Activated naive CD4-positive, alpha-beta T cell treated with anti-CD3 and anti-CD28 coated beads for 36 hours (primary cell): ENCODE measurements at regions of chrX and their contacts with region 1.

Region 1: DNA sequence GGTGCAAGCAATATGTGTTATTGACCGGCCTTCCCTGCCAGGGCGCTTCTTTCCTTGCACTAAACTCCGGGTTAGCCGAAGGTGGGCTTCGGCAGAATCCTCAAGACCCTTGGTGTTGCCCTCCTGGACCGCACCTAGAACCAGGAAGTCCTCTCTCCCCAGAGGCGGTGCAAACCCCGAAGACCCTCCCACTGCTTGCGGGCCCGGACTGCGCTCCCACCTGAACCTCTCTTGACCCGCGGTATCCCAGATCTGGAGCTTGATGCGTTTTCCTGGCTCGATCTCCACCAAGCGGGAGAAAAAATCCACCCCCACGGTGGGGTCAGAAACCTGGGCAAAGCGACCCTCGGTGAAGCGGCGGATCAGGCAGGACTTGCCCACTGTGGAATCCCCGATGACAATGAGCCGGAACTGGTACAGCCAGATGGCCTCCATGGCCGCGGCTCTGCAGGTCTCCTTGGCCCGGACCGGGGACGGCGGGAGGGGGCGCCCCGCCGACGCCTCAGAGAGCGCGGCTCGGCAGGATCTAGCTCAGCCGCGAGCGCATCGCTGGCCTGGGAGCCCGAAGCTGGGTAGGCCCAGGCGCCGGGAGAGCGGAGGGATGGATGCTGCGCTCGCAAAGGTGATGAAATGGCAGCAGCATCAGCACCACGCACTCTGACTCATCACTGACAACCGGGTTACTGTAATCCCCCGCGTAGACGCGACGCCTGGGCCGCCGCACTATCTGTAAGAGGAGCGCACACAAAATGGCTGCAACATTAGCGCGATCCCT is at the start of gene RAB39B:
- DNase-seq: peak; percentile 86
- H3K4me3 Mint-ChIP-seq: peak within 1 kb of the TSS; percentile 86
- H3K27ac Mint-ChIP-seq: peak within 1 kb of the TSS; percentile 93
- H3K4me1 Mint-ChIP-seq: peaks cover 19% of the 10 kb centered on the region
- H3K27me3 Mint-ChIP-seq: no peaks in the 10 kb centered on the region
- total RNA-seq, gene RAB39B: 11.6 to 13.0 TPM

Region 2: GRCh38 chrX:154804957-154805695 is 458.9 kb before region 1 on chrX and contains the start of gene MPP1:
- CTCF ChIA-PET with region 1: no interaction called
- intact Hi-C with region 1: loop called (anchors 10 kb)
- DNase-seq: peak; percentile 78
- H3K4me3 Mint-ChIP-seq: peak within 1 kb of the TSS; percentile 74
- H3K27ac Mint-ChIP-seq: no peak within 1 kb of the TSS
- H3K4me1 Mint-ChIP-seq: peaks cover 38% of the 10 kb centered on the region
- H3K27me3 Mint-ChIP-seq: no peaks in the 10 kb centered on the region
- total RNA-seq, gene MPP1: 23.9 to 24.3 TPM

Region 3: GRCh38 chrX:155216179-155216939 is 47.7 kb before region 1 on chrX and contains the start of gene VBP1:
- CTCF ChIA-PET with region 1: no interaction called
- intact Hi-C with region 1: loop called (anchors 1 kb)
- DNase-seq: peak; percentile 93
- H3K4me3 Mint-ChIP-seq: peak within 1 kb of the TSS; percentile 96
- H3K27ac Mint-ChIP-seq: peak within 1 kb of the TSS; percentile 88
- H3K4me1 Mint-ChIP-seq: peaks cover 15% of the 10 kb centered on the region
- H3K27me3 Mint-ChIP-seq: no peaks in the 10 kb centered on the region
- total RNA-seq, gene VBP1: 106 to 110 TPM

Region 4: DNA sequence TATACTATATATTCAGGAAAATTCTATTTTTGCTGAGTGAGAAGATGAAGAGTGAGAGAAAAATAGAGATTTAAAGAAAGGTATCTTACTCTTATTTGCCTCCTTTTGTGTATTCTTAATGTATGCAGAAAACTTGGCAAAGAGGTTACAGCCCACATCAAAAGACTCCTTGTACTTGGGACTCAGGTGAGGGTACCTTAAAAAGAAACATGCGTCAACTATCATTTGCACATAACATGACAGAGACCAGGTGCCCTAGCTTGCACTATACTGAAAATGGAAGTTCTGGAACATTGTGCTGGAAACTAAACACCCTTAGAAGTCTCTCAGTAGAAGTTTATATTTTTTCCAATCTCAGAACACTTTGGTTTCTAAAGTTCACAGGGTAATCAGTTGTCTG is 15.8 kb after region 1 on chrX:
- CTCF ChIA-PET with region 1: no interaction called
- intact Hi-C with region 1: loop called (anchors 1 kb)
- DNase-seq: no peak
- H3K4me3 Mint-ChIP-seq: no peak overlapping the region
- H3K27ac Mint-ChIP-seq: peak overlapping the region; percentile 63
- H3K4me1 Mint-ChIP-seq: peaks cover 8% of the 10 kb centered on the region
- H3K27me3 Mint-ChIP-seq: no peaks in the 10 kb centered on the region

Region 5: DNA sequence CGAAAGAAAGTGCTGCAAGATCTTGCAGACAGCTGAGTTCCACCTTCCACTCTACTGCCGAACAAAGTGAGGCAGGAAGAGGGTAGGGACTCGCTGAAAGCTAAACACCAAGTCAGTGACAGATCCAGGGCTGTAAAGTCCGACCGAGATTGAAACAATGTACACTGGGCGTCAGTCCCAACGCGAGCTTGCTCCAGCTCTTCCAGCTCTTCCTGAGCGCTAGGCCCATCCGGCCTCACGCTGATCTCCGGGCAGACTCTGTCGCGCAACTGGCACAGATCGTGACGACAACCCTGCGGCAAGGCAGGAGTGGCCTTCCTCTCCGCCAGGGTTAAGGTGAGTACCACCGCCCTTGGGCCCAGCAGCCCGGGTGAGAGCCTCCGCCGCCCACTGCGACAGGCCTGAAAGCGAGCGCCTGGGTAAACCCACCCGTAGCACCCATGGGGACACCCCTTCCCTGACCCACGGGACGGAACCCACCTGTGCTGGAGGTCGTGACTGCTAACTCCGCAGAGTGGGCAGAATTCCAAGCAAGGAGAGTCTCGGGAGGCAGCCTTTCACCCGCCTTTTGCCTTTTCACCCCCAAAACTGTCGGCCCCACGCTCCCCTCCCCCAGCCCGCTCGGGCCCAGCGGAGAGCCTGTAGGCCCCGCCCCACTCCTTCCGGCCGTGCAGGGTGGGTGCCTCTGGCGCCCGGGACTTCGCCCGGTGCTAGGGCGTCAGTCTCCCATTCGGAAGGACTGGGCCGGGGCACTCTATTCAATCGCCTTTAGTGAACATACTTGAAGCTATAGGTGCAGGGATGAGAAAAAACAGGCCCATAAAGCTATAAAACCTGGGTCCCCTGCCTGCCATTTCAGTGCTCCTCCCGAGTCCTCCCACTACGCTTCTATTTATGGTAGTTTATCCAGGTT is 348.5 kb after region 1 on chrX and contains the start of gene TMLHE:
- CTCF ChIA-PET with region 1: no interaction called
- intact Hi-C with region 1: loop called (anchors 10 kb)
- DNase-seq: peak; percentile 71
- H3K4me3 Mint-ChIP-seq: peak within 1 kb of the TSS; percentile 83
- H3K27ac Mint-ChIP-seq: peak within 1 kb of the TSS; percentile 92
- H3K4me1 Mint-ChIP-seq: peaks cover 22% of the 10 kb centered on the region
- H3K27me3 Mint-ChIP-seq: no peaks in the 10 kb centered on the region
- total RNA-seq, gene TMLHE: 13.2 to 14.7 TPM

Region 6: DNA sequence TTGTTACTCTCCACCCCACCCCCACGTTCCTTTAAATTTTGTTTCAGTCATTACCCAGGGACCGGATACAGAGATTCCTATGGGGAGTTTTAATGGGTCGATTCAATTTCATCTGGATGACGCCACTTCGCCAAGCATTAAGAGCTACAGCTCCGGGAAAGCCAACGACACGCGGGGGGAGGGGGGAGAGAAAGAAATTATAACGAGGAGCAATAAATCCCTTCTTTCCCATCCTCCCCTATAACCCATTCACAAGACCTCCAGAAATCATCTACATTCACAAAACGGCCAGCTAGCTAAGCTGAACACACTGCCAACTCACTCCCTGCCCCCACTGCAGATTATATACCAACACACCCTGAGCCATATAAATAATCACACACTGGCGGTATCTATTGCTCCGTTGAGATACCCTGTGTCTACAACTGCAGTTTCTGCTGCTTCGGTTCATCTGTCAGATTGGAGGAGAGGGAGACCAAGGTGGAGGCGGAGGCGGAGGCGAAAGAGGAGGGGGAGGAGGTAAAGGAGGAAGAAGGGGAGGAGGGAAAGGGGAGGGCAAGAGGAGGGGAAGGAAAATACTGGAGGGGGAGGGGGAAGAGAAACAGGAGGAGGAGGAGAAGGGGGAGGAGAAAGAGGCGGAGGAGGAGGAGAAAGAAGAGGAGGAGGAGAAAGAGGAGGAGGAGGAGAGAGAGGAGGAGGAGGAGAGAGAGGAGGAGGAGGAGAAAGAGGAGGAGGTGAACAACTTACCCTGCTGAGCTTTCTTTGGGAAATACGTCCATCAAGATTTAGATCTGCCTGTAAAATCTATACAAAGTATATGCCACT is 503.2 kb after region 1 on chrX:
- CTCF ChIA-PET with region 1: no interaction called
- intact Hi-C with region 1: loop called (anchors 10 kb)
- DNase-seq: peak; percentile 61
- H3K4me3 Mint-ChIP-seq: peak overlapping the region; percentile 77
- H3K27ac Mint-ChIP-seq: no peak overlapping the region
- H3K4me1 Mint-ChIP-seq: peaks cover 2% of the 10 kb centered on the region
- H3K27me3 Mint-ChIP-seq: no peaks in the 10 kb centered on the region

Region 7: GRCh38 chrX:155881158-155881993 is 617.3 kb after region 1 on chrX and contains the start of gene VAMP7:
- CTCF ChIA-PET with region 1: no interaction called
- intact Hi-C with region 1: loop called (anchors 5 kb)
- DNase-seq: peak; percentile 88
- H3K4me3 Mint-ChIP-seq: peak within 1 kb of the TSS; percentile 89
- H3K27ac Mint-ChIP-seq: peak within 1 kb of the TSS; percentile 86
- H3K4me1 Mint-ChIP-seq: peaks cover 20% of the 10 kb centered on the region
- H3K27me3 Mint-ChIP-seq: no peaks in the 10 kb centered on the region
- total RNA-seq, gene VAMP7: 33.5 to 34.4 TPM